Naive thymus-derived CD4-positive, alpha-beta T cell (primary cell): ENCODE measurements at regions of chr11 and their contacts with region 1.

Region 1: DNA sequence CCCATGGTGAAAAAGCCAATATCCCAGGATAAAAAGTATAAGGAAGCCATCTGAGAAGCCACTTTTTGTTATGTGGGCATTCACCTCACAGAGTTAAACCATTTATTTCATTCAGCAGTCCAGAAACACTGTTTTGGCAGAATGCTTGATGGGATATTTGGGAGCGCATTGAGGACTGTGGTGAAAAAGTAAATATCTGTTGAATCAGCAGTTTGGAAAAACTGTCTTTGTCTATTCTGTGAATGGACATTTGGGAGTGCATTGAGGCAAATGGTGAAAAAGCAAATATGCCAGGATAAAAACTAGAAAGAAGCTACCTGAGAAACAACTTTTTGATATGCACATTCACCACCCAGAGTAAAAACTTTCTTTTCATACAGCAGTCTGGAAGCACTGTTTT is 276.2 kb upstream of the TRIM48 start:
- DNase-seq: no peak
- ATAC-seq: no peak
- H3K4me3 ChIP-seq: no peak overlapping the region
- H3K4me3 Mint-ChIP-seq: no peak overlapping the region
- H3K27ac ChIP-seq: no peak overlapping the region
- H3K27ac Mint-ChIP-seq: no peak overlapping the region
- H3K4me1 ChIP-seq: no peaks in the 10 kb centered on the region
- H3K4me1 Mint-ChIP-seq: no peaks in the 10 kb centered on the region
- H3K27me3 ChIP-seq: no peaks in the 10 kb centered on the region
- H3K27me3 Mint-ChIP-seq: no peaks in the 10 kb centered on the region

Region 2: DNA sequence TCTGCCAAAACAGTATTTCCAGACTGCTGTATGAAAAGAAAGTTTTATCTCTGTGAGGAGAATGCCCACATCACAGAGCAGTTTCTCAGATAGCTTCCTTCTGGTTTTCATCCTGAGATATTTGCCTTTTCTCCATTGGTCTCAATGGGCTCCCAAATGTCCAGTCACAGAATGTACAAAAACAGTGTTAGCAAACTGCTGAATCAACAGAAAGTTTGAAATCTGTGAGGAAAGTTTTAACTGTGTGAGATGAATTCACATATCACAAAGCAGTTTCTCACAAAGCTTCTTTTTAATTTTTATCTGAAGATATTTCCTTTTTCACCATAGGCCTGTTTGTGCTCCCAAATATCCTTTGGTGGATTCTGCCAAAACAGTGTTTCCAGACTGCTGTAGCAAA is 69.0 kb after region 1 on chr11:
- CTCF ChIA-PET with region 1: no interaction called
- POLR2A ChIA-PET with region 1: no interaction called
- intact Hi-C with region 1: loop called in 1 of 2 experiments (anchors 10 kb)
- DNase-seq: no peak
- ATAC-seq: no peak
- H3K4me3 ChIP-seq: no peak overlapping the region
- H3K4me3 Mint-ChIP-seq: no peak overlapping the region
- H3K27ac ChIP-seq: no peak overlapping the region
- H3K27ac Mint-ChIP-seq: no peak overlapping the region
- H3K4me1 ChIP-seq: no peaks in the 10 kb centered on the region
- H3K4me1 Mint-ChIP-seq: no peaks in the 10 kb centered on the region
- H3K27me3 ChIP-seq: no peaks in the 10 kb centered on the region
- H3K27me3 Mint-ChIP-seq: no peaks in the 10 kb centered on the region